CD4-positive, alpha-beta T cell (primary cell): ENCODE measurements at regions of chr10 and their contacts with region 1.

Region 1: DNA sequence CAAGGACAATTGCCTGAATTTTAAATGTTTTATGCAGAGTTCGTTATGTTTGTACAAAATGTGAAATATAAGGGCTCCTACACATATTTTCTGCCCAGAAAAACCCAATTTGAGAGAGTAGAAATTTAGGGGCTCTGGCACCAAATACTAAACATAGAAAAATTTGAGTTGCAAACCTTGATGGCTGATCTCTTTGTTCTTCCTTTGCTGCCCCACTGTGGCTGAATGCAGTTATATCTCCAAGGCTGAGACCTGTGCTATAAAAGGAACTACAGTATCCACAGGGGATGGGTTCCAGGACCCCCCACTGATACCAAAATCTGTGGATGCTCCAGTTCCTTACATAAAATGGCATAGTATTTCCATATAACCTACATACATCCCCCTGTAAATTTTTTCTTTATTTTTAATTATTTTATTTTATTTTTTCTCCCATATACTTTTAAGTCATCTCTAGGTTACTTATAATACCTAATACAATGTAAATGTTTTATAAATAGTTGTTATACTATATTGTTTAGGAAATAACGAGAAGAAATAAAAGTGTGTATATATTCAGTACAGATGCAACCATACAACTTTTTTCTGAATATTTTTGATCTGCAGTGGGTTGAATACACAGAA is 22.5 kb downstream of the CFAP43 start:
- DNase-seq: peak in 13 of 14 experiments; percentile 7 to 67 (median 27)
- ATAC-seq: peak; percentile 60
- H3K4me3 ChIP-seq: no peak overlapping the region
- H3K4me3 Mint-ChIP-seq: no peak overlapping the region
- H3K27ac ChIP-seq: no peak overlapping the region
- H3K27ac Mint-ChIP-seq: no peak overlapping the region
- H3K4me1 ChIP-seq: no peaks in the 10 kb centered on the region
- H3K4me1 Mint-ChIP-seq: no peaks in the 10 kb centered on the region
- H3K27me3 ChIP-seq: no peaks in the 10 kb centered on the region
- H3K27me3 Mint-ChIP-seq: peaks cover 20% of the 10 kb centered on the region
- CTCF ChIP-seq: peak; percentile 70

Region 2: DNA sequence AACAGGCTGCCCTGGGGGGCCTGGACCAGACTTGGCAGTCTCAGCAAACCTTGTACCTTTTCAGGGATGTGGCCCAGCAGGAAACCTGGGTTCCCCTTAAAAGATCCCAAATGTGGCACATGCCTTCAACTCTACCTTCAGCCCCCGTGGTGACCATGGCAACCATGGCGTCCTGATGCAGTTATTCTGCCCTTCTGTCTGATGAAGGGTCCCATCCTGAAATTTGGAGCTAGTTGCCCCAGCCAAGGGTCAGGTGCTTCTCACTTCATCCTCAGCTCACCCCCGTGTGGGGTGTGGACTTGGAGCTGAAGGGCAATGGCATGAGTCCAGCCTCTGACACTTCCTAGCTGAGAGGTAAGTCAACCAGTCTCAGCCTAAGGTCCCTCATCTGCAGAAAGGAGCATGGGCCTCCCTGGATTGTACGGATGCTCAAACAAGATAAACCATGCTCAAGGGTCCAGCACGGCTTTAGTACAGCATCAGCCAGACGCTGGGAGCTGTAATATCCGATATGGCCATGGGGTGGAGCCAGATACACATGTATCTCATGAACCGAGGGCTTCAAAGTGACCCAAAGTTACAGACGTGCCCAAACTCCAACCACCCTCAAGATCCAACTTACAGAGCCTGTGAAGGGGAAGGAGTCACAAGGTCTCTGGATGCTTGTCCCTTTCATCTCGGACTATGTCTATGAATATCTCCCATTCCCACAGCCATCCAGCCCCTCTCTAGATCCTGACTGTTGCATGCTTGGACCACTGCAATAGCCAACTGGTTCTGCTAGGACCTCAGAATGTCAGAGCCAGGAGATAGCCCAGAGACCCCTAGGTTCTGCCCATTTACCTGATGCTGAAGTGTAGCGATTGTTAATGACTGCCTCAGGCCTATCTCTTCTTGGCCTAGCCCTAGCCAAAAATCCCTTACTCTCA is 496.9 kb before region 1 on chr10:
- CTCF ChIA-PET with region 1: no interaction called
- POLR2A ChIA-PET with region 1: no interaction called
- intact Hi-C with region 1: loop called (anchors 2 to 5 kb)
- DNase-seq: peak; percentile 68 to 87 (median 79)
- ATAC-seq: peak; percentile 94
- H3K4me3 ChIP-seq: no peak overlapping the region
- H3K4me3 Mint-ChIP-seq: no peak overlapping the region
- H3K27ac ChIP-seq: no peak overlapping the region
- H3K27ac Mint-ChIP-seq: no peak overlapping the region
- H3K4me1 ChIP-seq: peaks cover 7% of the 10 kb centered on the region
- H3K4me1 Mint-ChIP-seq: no peaks in the 10 kb centered on the region
- H3K27me3 ChIP-seq: no peaks in the 10 kb centered on the region
- H3K27me3 Mint-ChIP-seq: no peaks in the 10 kb centered on the region
- CTCF ChIP-seq: peak; percentile 88

Region 3: GRCh38 chr10:104028146-104028545 is 181.5 kb before region 1 on chr10:
- CTCF ChIA-PET with region 1: no interaction called
- POLR2A ChIA-PET with region 1: no interaction called
- intact Hi-C with region 1: loop called in 1 of 2 experiments (anchors 5 kb)
- DNase-seq: peak in 7 of 14 experiments; percentile 11 to 57 (median 23)
- ATAC-seq: peak; percentile 98
- H3K4me3 ChIP-seq: no peak overlapping the region
- H3K4me3 Mint-ChIP-seq: no peak overlapping the region
- H3K27ac ChIP-seq: no peak overlapping the region
- H3K27ac Mint-ChIP-seq: peak overlapping the region; percentile 50
- H3K4me1 ChIP-seq: no peaks in the 10 kb centered on the region
- H3K4me1 Mint-ChIP-seq: peaks cover 5% of the 10 kb centered on the region
- H3K27me3 ChIP-seq: no peaks in the 10 kb centered on the region
- H3K27me3 Mint-ChIP-seq: no peaks in the 10 kb centered on the region
- CTCF ChIP-seq: no peak

Region 4: GRCh38 chr10:104045151-104046089 is 164.3 kb before region 1 on chr10:
- CTCF ChIA-PET with region 1: no interaction called
- POLR2A ChIA-PET with region 1: no interaction called
- intact Hi-C with region 1: loop called in 1 of 2 experiments (anchors 5 kb)
- DNase-seq: peak in 2 of 14 experiments; percentile 12 to 23
- ATAC-seq: no peak
- H3K4me3 ChIP-seq: no peak overlapping the region
- H3K4me3 Mint-ChIP-seq: no peak overlapping the region
- H3K27ac ChIP-seq: no peak overlapping the region
- H3K27ac Mint-ChIP-seq: no peak overlapping the region
- H3K4me1 ChIP-seq: no peaks in the 10 kb centered on the region
- H3K4me1 Mint-ChIP-seq: no peaks in the 10 kb centered on the region
- H3K27me3 ChIP-seq: no peaks in the 10 kb centered on the region
- H3K27me3 Mint-ChIP-seq: no peaks in the 10 kb centered on the region
- CTCF ChIP-seq: no peak

Region 5: DNA sequence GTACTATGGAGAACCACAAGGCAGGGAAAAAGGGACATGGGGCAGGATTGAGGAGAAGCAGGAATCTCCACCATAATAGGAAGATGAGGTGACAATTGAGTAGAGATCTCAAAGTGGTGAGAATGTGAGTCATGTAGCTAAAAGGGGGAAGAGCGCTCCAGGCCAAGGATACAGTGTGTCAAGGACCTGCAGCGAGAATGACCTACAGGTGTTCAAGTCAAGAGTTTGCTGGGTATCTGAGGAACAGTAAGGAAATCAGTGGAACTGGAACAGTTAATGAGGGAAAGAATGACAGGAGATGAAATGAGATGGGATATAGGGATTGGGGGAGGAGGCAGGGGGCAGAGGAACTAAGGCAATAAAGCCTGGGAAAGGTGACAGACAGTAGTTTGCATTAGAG is 54.1 kb before region 1 on chr10:
- CTCF ChIA-PET with region 1: no interaction called
- POLR2A ChIA-PET with region 1: no interaction called
- intact Hi-C with region 1: no loop called
- DNase-seq: no peak
- ATAC-seq: no peak
- H3K4me3 ChIP-seq: no peak overlapping the region
- H3K4me3 Mint-ChIP-seq: no peak overlapping the region
- H3K27ac ChIP-seq: no peak overlapping the region
- H3K27ac Mint-ChIP-seq: no peak overlapping the region
- H3K4me1 ChIP-seq: no peaks in the 10 kb centered on the region
- H3K4me1 Mint-ChIP-seq: no peaks in the 10 kb centered on the region
- H3K27me3 ChIP-seq: peaks cover 4 to 8% of the 10 kb centered on the region in 2 experiments
- H3K27me3 Mint-ChIP-seq: peaks cover 48% of the 10 kb centered on the region
- CTCF ChIP-seq: no peak

Region 6: GRCh38 chr10:104291439-104291951 is 81.8 kb after region 1 on chr10:
- CTCF ChIA-PET with region 1: no interaction called
- POLR2A ChIA-PET with region 1: no interaction called
- intact Hi-C with region 1: no loop called
- DNase-seq: peak; percentile 81 to 95 (median 86)
- ATAC-seq: peak; percentile 100
- H3K4me3 ChIP-seq: no peak overlapping the region
- H3K4me3 Mint-ChIP-seq: no peak overlapping the region
- H3K27ac ChIP-seq: no peak overlapping the region
- H3K27ac Mint-ChIP-seq: no peak overlapping the region
- H3K4me1 ChIP-seq: peaks cover 8% of the 10 kb centered on the region
- H3K4me1 Mint-ChIP-seq: peaks cover 7% of the 10 kb centered on the region
- H3K27me3 ChIP-seq: peaks cover 0 to 4% of the 10 kb centered on the region in 2 experiments
- H3K27me3 Mint-ChIP-seq: peaks cover 26% of the 10 kb centered on the region
- CTCF ChIP-seq: peak; percentile 100